ENCODE measurements at regions of chr2 and their contacts with region 1.

Region 1: GRCh38 chr2:69717861-69718273 is 24.1 kb upstream of the ANXA4 start:
- DNase-seq: no peak
- ATAC-seq: peak in 1 of 4 donors; percentile 36
- H3K4me3 ChIP-seq: no peak overlapping the region
- H3K27ac ChIP-seq: no peak overlapping the region
- H3K4me1 ChIP-seq: no peaks in the 10 kb centered on the region
- H3K27me3 ChIP-seq: no peaks in the 10 kb centered on the region
- CTCF ChIP-seq: no peak

Region 2: GRCh38 chr2:69436596-69436937 is 281.3 kb before region 1 on chr2:
- intact Hi-C with region 1: no loop called
- DNase-seq: no peak
- ATAC-seq: peak in 3 of 4 donors; percentile 5 to 11 (median 8)
- H3K4me3 ChIP-seq: peak overlapping the region; percentile 78 to 86 (median 82)
- H3K27ac ChIP-seq: peak overlapping the region; percentile 87 to 99 (median 96)
- H3K4me1 ChIP-seq: peaks cover 0 to 14% (median 3%) of the 10 kb centered on the region in 3 donors
- H3K27me3 ChIP-seq: no peaks in the 10 kb centered on the region
- CTCF ChIP-seq: no peak

Region 3: DNA sequence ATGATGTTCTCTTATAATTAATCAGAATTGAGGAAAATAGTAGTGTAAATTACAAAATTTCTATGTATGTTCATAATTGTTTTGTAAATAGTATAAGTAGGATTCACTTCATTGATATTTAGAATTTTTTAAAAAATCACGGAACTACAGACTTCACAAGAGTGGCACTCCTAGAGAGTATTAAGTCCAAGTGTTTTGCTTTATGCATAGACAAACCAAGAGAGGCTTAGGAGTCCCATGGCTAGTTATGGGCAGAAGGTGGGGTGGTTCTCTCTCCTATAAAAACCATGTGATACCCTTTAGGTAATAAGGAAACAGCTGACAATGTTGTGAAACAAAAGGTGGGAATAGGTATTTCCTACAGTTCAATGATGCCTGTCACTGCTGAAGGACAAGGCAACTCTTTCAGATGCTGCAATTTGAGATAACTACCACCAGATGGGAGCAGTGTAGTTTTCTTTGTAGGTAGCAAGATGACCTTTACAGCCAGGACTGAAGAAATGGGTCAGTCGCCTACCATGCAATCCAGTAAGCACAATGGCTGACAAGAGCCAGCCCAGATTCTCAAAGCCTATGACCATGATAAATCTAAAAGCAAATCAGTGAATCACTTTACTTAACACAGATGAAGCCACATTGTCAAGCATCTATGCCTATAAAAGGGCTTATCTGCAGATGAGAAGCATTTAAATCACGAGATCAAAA is 158.3 kb before region 1 on chr2:
- intact Hi-C with region 1: loop called (anchors 2 to 10 kb)
- DNase-seq: peak in 2 of 6 donors; percentile 22 to 44
- ATAC-seq: peak; percentile 80 to 95 (median 92)
- H3K4me3 ChIP-seq: no peak overlapping the region
- H3K27ac ChIP-seq: no peak overlapping the region
- H3K4me1 ChIP-seq: peaks cover 0 to 7% (median 6%) of the 10 kb centered on the region in 3 donors
- H3K27me3 ChIP-seq: no peaks in the 10 kb centered on the region
- CTCF ChIP-seq: peak; percentile 25 to 55 (median 43)

Region 4: DNA sequence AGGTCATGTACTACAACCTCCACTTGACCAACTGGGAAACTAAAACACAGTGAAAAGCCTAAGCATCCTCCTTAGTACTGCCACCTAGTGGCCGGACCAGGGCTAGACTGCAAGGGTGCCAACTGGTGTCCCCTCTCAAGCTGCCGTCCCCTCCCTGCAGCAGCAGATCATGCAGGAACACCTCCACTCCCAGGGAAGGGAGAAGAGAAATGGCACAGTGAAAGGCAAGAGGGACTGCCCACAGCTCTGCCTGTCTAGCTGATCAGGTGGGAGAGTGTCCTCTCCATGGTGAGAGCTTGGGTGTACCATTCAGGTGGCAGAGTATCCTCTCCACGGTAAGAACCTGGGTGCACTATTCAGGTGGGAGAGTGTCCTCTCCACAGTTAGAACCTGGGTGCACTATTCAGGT is 152.4 kb before region 1 on chr2:
- intact Hi-C with region 1: loop called in 1 of 3 experiments (anchors 10 kb)
- DNase-seq: peak in 5 of 6 donors; percentile 44 to 74 (median 56)
- ATAC-seq: peak; percentile 43 to 82 (median 75)
- H3K4me3 ChIP-seq: no peak overlapping the region
- H3K27ac ChIP-seq: no peak overlapping the region
- H3K4me1 ChIP-seq: peaks cover 5 to 18% (median 8%) of the 10 kb centered on the region in 3 donors
- H3K27me3 ChIP-seq: no peaks in the 10 kb centered on the region
- CTCF ChIP-seq: peak; percentile 35 to 69 (median 65)

Measured in pancreas (tissue), 10 donors.